ENCODE measurements at regions of chr3 and their contacts with region 1.

Region 1: GRCh38 chr3:88263417-88264100 is 113.8 kb downstream of the C3orf38 start:
- DNase-seq: no peak
- ATAC-seq: no peak
- H3K4me3 ChIP-seq: no peak overlapping the region
- H3K27ac ChIP-seq: no peak overlapping the region
- H3K4me1 ChIP-seq: no peaks in the 10 kb centered on the region
- H3K27me3 ChIP-seq: no peaks in the 10 kb centered on the region
- CTCF ChIP-seq: no peak
- POLR2A ChIP-seq: no peak
- RAD21 ChIP-seq: no peak

Region 2: GRCh38 chr3:88509582-88509981 is 246.0 kb after region 1 on chr3:
- CTCF ChIA-PET with region 1: no interaction called
- POLR2A ChIA-PET with region 1: no interaction called
- dilution Hi-C with region 1: no loop called
- in situ Hi-C with region 1: no loop called
- intact Hi-C with region 1: loop called (anchors 10 kb)
- DNase-seq: no peak
- ATAC-seq: no peak
- H3K4me3 ChIP-seq: no peak overlapping the region
- H3K27ac ChIP-seq: no peak overlapping the region
- H3K4me1 ChIP-seq: no peaks in the 10 kb centered on the region
- H3K27me3 ChIP-seq: no peaks in the 10 kb centered on the region
- CTCF ChIP-seq: no peak
- POLR2A ChIP-seq: no peak
- RAD21 ChIP-seq: no peak

Measured in IMR-90 (cell line).